Activated CD4-positive, alpha-beta T cell treated with anti-CD3 and anti-CD28 coated beads, Interleukin-2, amount 10 ng/mL, durations not matched to agents 24 days and 14 days (primary cell): ENCODE measurements at regions of chr16 and their contacts with region 1.

Region 1: GRCh38 chr16:50747207-50747956 is 5.5 kb downstream of the CYLD start:
- DNase-seq: peak; percentile 86
- H3K4me3 Mint-ChIP-seq: peak overlapping the region; percentile 80
- H3K27ac Mint-ChIP-seq: peak overlapping the region; percentile 90
- H3K4me1 Mint-ChIP-seq: peaks cover 50% of the 10 kb centered on the region
- H3K27me3 Mint-ChIP-seq: no peaks in the 10 kb centered on the region

Region 2: GRCh38 chr16:50335196-50335958 is 412.0 kb before region 1 on chr16:
- intact Hi-C with region 1: loop called (anchors 5 kb)
- DNase-seq: peak; percentile 73
- H3K4me3 Mint-ChIP-seq: no peak overlapping the region
- H3K27ac Mint-ChIP-seq: peak overlapping the region; percentile 83
- H3K4me1 Mint-ChIP-seq: peaks cover 26% of the 10 kb centered on the region
- H3K27me3 Mint-ChIP-seq: no peaks in the 10 kb centered on the region

Region 3: GRCh38 chr16:50368410-50369132 is 378.8 kb before region 1 on chr16 and contains the start of gene BRD7:
- intact Hi-C with region 1: loop called (anchors 5 kb)
- DNase-seq: peak; percentile 89
- H3K4me3 Mint-ChIP-seq: peak within 1 kb of the TSS; percentile 92
- H3K27ac Mint-ChIP-seq: peak within 1 kb of the TSS; percentile 91
- H3K4me1 Mint-ChIP-seq: peaks cover 41% of the 10 kb centered on the region
- H3K27me3 Mint-ChIP-seq: peaks cover 3% of the 10 kb centered on the region
- total RNA-seq, gene BRD7: 92.7 and 98.8 TPM in 2 replicates

Region 4: GRCh38 chr16:50548125-50548908 is 199.1 kb before region 1 on chr16 and contains the start of gene NKD1:
- intact Hi-C with region 1: loop called (anchors 1 kb)
- DNase-seq: peak; percentile 92
- H3K4me3 Mint-ChIP-seq: peak within 1 kb of the TSS; percentile 89
- H3K27ac Mint-ChIP-seq: peak within 1 kb of the TSS; percentile 64
- H3K4me1 Mint-ChIP-seq: peaks cover 8% of the 10 kb centered on the region
- H3K27me3 Mint-ChIP-seq: peaks cover 57% of the 10 kb centered on the region
- total RNA-seq, gene NKD1: 0.77 and 1.7 TPM in 2 replicates

Region 5: GRCh38 chr16:50671644-50672260 is 75.6 kb before region 1 on chr16:
- intact Hi-C with region 1: loop called (anchors 1 kb)
- DNase-seq: peak; percentile 90
- H3K4me3 Mint-ChIP-seq: no peak overlapping the region
- H3K27ac Mint-ChIP-seq: peak overlapping the region; percentile 12
- H3K4me1 Mint-ChIP-seq: peaks cover 34% of the 10 kb centered on the region
- H3K27me3 Mint-ChIP-seq: no peaks in the 10 kb centered on the region

Region 6: DNA sequence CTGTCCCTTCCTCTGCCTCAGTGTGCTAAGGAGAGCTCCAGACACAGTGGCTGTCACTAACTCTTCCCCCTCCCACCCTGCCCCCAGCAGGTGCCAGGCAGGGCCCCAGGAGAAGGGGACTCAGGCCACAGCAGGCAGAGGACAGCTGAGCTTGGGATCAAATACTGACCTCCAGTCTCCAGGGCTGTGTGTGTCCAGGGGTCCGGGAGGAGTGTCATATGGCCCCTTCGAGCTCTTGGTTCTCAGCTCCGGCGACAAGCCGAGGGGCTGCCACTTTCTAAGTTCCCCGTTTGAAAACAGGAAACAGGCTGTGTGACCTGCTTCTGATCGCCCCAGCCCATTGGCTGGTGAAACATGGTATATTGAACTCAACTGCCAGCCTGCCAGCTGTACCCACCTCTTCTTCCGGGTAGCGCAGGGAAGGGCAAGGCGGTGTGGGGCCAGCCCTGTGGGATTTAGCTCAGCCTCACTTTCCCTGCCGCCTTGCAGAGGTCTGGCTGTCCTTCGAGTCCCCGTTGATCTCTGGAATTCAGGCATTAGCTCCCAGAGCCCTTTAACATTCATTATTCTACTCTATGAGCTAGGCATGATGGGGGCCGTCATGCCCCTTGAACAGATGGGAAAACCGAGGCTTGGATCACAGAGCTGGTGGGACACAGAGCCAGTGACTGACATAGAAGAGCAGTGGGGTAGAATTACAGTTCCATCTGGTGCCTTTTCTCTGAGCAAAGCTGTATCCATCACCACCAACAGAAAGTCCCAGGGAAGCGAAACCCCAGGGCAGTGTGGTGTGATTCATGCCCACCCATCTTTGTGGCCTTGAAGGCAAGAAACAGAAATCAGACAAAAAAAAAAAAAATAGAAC is 66.1 kb before region 1 on chr16 and contains the start of gene SNX20:
- intact Hi-C with region 1: loop called (anchors 1 kb)
- DNase-seq: peak; percentile 87
- H3K4me3 Mint-ChIP-seq: peak within 1 kb of the TSS; percentile 94
- H3K27ac Mint-ChIP-seq: peak within 1 kb of the TSS; percentile 91
- H3K4me1 Mint-ChIP-seq: peaks cover 80% of the 10 kb centered on the region
- H3K27me3 Mint-ChIP-seq: no peaks in the 10 kb centered on the region
- total RNA-seq, gene SNX20: 33.3 and 34.9 TPM in 2 replicates

Region 7: GRCh38 chr16:50765260-50765659 is 17.9 kb after region 1 on chr16:
- intact Hi-C with region 1: loop called (anchors 2 kb)
- DNase-seq: no peak
- H3K4me3 Mint-ChIP-seq: peak overlapping the region; percentile 39
- H3K27ac Mint-ChIP-seq: peak overlapping the region; percentile 89
- H3K4me1 Mint-ChIP-seq: peaks cover 62% of the 10 kb centered on the region
- H3K27me3 Mint-ChIP-seq: no peaks in the 10 kb centered on the region